GM10248 (cell line): ENCODE measurements at regions of chr11 and their contacts with region 1.

Region 1: GRCh38 chr11:60775420-60775961 is 9.6 kb upstream of the MS4A10 start:
- DNase-seq: peak; percentile 87
- CTCF ChIP-seq: peak; percentile 74

Region 2: DNA sequence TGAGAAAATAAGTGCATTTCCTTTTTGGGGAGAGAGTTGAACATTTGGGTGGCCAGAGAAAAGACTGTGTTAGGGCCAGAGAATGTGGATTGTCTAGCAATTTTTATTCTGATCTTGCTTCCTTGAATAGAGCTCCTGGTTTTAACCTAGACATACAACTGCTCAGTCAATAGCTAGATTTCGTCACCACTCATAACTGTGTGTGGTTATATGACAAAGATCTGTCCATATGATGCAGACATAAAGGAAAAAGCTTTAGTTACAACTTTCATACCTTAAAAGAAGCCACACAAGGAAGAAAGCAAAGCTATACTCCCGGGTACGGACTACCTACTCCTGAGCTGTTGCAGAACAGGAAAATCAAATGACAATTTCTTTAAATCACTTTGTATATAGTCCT is 629.8 kb before region 1 on chr11:
- CTCF ChIA-PET with region 1: no interaction called
- POLR2A ChIA-PET with region 1: no interaction called
- DNase-seq: no peak
- CTCF ChIP-seq: no peak

Region 3: DNA sequence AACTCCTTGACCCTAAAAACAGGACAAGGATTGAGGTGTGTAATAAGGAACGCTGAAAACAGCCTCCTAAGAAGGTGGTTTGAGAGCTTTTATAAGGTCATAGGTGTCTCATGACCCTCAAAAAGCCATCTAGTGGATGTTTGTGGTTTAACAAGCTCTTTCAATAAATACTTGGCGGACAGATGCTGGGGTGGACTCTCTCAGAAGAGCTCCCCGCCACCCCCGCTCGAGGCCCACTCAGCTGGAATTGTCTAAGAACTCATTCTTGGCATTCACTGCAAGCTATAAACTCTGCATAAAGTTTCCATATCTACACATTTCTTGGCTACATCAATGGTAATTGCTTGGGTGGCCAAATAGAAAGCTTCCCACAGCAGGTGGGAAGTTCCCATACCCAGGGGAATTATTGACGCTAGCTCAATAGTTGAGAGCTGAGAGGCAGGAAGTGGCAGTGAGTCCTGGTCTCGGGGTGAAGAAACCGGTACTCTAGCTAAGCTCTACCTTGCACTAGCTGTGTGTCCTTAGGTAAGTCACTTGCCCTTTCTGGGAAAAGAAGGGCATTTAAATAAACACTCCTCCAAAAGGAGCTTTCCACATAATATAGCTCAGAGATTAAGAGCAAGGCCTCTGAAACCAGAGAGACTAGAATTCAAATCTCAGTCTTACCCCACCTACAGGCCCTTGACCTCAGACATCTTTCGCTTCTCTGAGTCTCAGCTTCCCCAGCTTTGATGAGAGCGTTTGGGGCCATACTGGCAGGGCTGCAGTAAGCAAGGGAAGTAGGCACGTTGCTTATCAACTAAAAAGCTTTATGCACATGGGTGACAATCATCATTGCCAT is 12.4 kb before region 1 on chr11:
- CTCF ChIA-PET with region 1: interaction called, 268 read pairs
- POLR2A ChIA-PET with region 1: interaction called, 3 read pairs
- DNase-seq: peak; percentile 66
- CTCF ChIP-seq: peak; percentile 49

Region 4: DNA sequence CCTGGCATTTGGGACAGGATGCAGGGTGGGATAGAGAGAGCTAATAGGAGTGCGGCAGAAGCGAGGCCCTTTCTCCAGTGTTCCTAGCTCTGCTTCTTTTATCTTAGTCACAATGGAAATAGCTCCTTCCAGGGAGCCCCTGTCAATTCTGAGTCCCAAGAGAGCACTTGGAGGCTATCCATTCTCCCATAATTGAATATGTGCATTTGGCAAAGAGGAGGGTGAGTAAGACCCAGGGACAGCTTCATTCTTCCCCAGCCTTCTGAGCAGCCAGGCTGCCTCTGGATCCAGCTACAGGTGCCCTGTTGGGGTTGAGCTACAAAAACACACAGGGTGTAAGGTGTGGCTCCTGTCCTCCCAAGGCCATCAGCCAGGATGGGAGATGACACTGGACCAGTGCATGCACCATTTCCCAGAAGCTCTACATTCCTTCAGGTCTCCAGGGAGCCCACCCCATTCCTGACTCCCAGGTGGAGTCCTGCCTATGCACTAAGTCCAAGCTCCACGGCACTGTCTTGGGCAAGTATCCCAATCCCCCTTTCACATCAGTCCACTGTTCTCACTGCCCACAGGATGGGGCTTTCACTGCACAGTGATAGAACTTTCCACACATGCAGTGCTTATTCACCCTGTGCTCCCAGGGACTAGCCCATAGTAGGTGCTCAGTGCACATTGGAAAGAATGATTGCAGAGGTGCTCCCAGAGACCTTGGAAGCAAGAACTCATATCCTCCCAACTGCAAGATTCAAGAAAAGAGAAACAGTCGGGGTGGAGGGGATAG is 15.9 kb after region 1 on chr11:
- CTCF ChIA-PET with region 1: interaction called, 14 read pairs
- POLR2A ChIA-PET with region 1: no interaction called
- DNase-seq: no peak
- CTCF ChIP-seq: no peak

Region 5: GRCh38 chr11:60821827-60822599 is 46.5 kb after region 1 on chr11:
- CTCF ChIA-PET with region 1: interaction called, 13 read pairs
- POLR2A ChIA-PET with region 1: no interaction called
- DNase-seq: no peak
- CTCF ChIP-seq: no peak

Region 6: GRCh38 chr11:60887556-60887955 is 112.1 kb after region 1 on chr11:
- CTCF ChIA-PET with region 1: interaction called, 38 read pairs
- POLR2A ChIA-PET with region 1: no interaction called
- DNase-seq: no peak
- CTCF ChIP-seq: peak; percentile 59

Region 7: DNA sequence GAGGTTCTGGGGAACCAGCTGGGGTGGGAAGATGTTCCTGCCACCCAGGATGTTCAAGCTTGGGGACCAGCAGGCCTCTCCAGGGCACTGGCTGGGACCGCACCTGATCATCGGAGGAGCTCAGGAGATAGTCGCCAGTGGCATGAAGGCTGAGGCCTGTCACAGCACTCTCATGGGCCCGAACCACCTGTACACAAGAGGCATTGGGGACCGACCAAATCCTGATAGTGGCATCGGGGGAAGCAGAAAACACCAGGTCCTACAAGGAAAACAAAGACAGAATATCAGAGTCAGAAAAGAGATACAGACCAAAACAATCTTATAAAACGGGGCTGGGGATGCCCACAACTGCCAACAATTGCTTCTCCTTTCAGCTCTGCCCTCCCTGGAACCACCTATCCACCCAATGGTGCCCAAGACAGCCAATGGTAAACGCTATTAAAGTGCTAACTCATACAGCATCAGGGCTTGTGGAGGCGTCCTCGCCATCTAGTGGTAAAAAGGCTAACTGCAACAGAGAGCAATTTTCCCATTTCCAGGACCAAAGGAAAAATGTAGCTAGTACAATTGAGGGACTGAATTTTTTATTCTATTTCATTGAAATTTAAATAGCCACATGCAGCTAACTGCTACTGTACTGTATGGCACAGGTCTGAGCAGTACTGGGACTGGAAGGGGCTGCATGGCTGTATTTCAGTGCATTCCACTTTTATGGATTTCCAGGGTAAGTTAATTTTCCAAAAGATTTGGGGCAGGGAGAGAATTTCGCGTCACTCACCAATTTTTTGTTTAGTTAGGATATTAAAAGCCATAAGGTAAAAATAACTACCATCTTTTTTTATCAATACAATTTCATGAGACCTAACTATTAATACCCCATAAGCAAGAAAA is 123.8 kb after region 1 on chr11:
- CTCF ChIA-PET with region 1: interaction called, 29 read pairs
- POLR2A ChIA-PET with region 1: no interaction called
- DNase-seq: peak; percentile 58
- CTCF ChIP-seq: peak; percentile 89

Region 8: DNA sequence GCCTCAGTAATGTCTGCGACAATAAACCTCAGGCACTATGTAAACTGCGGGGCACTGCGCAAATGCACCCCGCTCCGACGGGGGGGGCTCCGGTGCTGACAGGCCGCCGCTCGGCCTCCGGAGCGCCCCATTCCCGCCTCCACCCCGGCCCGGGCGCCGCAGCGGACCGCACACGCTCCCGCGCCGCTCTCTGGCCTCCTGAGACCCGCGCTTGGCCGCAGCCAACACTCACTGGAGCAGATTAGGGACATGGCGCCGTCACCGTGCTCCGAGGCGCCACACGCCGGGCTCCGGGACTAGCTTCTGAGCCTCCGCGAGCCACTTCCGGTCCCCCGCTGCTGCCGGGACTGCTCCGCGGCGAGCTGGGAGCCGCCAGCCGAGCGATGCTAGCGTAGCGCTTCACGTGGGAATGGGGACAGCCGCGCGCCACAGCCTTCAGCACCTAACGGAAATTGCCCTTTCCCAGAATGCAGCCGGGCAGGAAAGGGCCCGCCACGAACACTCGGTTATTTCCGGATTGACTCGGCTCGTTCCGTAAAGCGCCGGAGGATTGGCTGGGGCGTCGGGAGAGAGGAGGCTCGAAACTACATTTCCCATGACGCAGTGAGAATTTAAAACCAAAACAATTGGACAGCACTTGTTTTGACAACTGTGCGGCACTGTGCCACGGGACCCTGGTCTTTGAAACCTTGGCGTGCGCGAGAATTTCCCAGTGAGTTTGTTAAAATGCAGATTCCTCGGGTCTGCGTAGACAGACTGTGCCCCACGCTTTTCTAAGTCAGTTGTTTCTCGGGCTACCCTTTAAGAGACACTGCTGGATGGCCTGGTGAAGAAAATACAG is 130.9 kb after region 1 on chr11 and contains the start of gene PRPF19:
- CTCF ChIA-PET with region 1: interaction called, 17 read pairs
- POLR2A ChIA-PET with region 1: no interaction called
- DNase-seq: peak; percentile 97
- CTCF ChIP-seq: no peak